Activated CD4-positive, alpha-beta T cell treated with anti-CD3 and anti-CD28 coated beads for 36 hours (primary cell): ENCODE measurements at regions of chr22 and their contacts with region 1.

Region 1: GRCh38 chr22:35539910-35540594 is 579 bp upstream of the RASD2 start:
- DNase-seq: peak; percentile 75
- ATAC-seq: peak; percentile 85
- H3K4me3 Mint-ChIP-seq: peak overlapping the region; percentile 62
- H3K27ac Mint-ChIP-seq: no peak overlapping the region
- H3K4me1 Mint-ChIP-seq: peaks cover 3% of the 10 kb centered on the region
- H3K27me3 Mint-ChIP-seq: peaks cover 31% of the 10 kb centered on the region

Region 2: GRCh38 chr22:35552196-35552842 is 12.3 kb after region 1 on chr22:
- CTCF ChIA-PET with region 1: interaction called, 4 read pairs
- POLR2A ChIA-PET with region 1: interaction called, 4 read pairs
- intact Hi-C with region 1: loop called in 1 of 2 experiments (anchors 1 kb)
- DNase-seq: peak; percentile 92
- ATAC-seq: peak; percentile 98
- H3K4me3 Mint-ChIP-seq: no peak overlapping the region
- H3K27ac Mint-ChIP-seq: peak overlapping the region; percentile 20
- H3K4me1 Mint-ChIP-seq: peaks cover 12% of the 10 kb centered on the region
- H3K27me3 Mint-ChIP-seq: no peaks in the 10 kb centered on the region

Region 3: GRCh38 chr22:35622191-35622913 is 82.3 kb after region 1 on chr22:
- CTCF ChIA-PET with region 1: no interaction called
- POLR2A ChIA-PET with region 1: no interaction called
- intact Hi-C with region 1: loop called in 1 of 2 experiments (anchors 5 kb)
- DNase-seq: no peak
- ATAC-seq: no peak
- H3K4me3 Mint-ChIP-seq: no peak overlapping the region
- H3K27ac Mint-ChIP-seq: no peak overlapping the region
- H3K4me1 Mint-ChIP-seq: peaks cover 7% of the 10 kb centered on the region
- H3K27me3 Mint-ChIP-seq: no peaks in the 10 kb centered on the region

Region 4: GRCh38 chr22:35697142-35697541 is 157.1 kb after region 1 on chr22:
- CTCF ChIA-PET with region 1: no interaction called
- POLR2A ChIA-PET with region 1: no interaction called
- intact Hi-C with region 1: no loop called
- DNase-seq: peak; percentile 76
- ATAC-seq: peak; percentile 70
- H3K4me3 Mint-ChIP-seq: no peak overlapping the region
- H3K27ac Mint-ChIP-seq: no peak overlapping the region
- H3K4me1 Mint-ChIP-seq: no peaks in the 10 kb centered on the region
- H3K27me3 Mint-ChIP-seq: peaks cover 4% of the 10 kb centered on the region

Region 5: GRCh38 chr22:35995772-35996171 is 455.7 kb after region 1 on chr22:
- CTCF ChIA-PET with region 1: no interaction called
- POLR2A ChIA-PET with region 1: no interaction called
- intact Hi-C with region 1: no loop called
- DNase-seq: no peak
- ATAC-seq: no peak
- H3K4me3 Mint-ChIP-seq: no peak overlapping the region
- H3K27ac Mint-ChIP-seq: no peak overlapping the region
- H3K4me1 Mint-ChIP-seq: no peaks in the 10 kb centered on the region
- H3K27me3 Mint-ChIP-seq: no peaks in the 10 kb centered on the region